ENCODE measurements at regions of chr7 and their contacts with region 1.

Region 1: DNA sequence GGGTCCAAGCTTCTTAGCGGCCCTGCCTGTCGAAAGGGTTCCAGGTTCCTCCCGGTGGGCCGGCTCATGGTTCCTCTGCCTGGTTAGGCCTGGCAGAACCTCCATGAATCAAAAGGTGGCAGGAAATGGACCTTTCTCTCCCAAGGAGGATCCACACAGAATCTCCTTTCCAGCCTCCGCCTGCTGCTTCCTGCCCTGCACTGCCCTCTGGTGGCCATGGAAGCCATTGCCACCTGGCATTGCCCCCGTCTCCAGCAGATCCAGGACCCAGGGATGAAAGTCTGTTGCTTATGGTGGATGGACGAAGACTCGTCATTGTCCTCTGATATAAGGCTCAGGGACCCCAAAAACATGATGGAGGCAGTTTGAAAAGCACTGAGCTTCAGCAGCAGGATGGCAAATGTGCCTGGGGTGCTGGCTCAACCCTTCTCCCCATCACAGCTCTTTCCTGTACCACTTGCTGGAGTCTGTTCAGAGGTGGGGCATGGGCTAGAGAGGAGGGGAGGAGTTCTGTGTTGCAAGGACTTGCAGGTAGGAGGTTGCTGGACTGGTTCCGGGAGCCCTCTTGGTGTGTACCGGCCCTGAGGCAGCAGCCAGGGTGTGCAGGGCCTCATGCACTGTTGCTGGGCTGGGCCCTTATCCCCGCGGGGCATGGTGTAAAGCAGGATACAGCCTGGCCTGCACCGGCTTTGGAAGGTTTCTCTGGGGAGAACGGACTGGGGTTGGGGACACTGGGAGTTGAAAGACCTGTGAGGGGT is 11.3 kb upstream of the INMT start:
- DNase-seq: peak; percentile 85
- H3K4me3 Mint-ChIP-seq: no peak overlapping the region
- H3K27ac Mint-ChIP-seq: no peak overlapping the region
- H3K4me1 Mint-ChIP-seq: peaks cover 29% of the 10 kb centered on the region
- H3K27me3 Mint-ChIP-seq: no peaks in the 10 kb centered on the region

Region 2: DNA sequence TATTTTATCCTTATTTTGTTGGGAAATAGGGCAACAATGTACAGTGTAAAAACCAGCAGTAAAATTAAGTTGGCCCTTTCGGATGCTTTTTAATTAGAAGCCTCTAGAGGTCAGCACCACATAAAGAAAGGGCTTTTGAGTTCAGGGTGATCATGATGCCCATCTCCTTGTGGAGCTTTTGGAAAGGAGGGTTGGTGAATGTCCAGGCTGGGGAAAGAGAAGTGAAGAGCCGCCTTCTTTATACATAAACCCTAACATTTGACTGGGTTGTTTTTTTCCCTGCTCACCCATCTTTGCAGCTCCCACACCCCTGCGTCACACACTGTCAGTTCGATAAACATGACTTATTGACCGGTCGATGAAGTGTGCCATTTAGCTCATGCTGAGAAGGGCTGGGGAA is 576.0 kb before region 1 on chr7:
- CTCF ChIA-PET with region 1: interaction called, 3 read pairs
- intact Hi-C with region 1: loop called (anchors 5 kb)
- DNase-seq: no peak
- H3K4me3 Mint-ChIP-seq: no peak overlapping the region
- H3K27ac Mint-ChIP-seq: peak overlapping the region; percentile 14
- H3K4me1 Mint-ChIP-seq: peaks cover 32% of the 10 kb centered on the region
- H3K27me3 Mint-ChIP-seq: no peaks in the 10 kb centered on the region

Region 3: GRCh38 chr7:30510124-30511075 is 230.2 kb before region 1 on chr7:
- CTCF ChIA-PET with region 1: interaction called, 4 read pairs
- intact Hi-C with region 1: loop called (anchors 1 kb)
- DNase-seq: peak; percentile 57
- H3K4me3 Mint-ChIP-seq: no peak overlapping the region
- H3K27ac Mint-ChIP-seq: no peak overlapping the region
- H3K4me1 Mint-ChIP-seq: peaks cover 5% of the 10 kb centered on the region
- H3K27me3 Mint-ChIP-seq: no peaks in the 10 kb centered on the region

Region 4: GRCh38 chr7:30634193-30634626 is 106.4 kb before region 1 on chr7:
- CTCF ChIA-PET with region 1: interaction called, 12 read pairs
- intact Hi-C with region 1: no loop called
- DNase-seq: no peak
- H3K4me3 Mint-ChIP-seq: no peak overlapping the region
- H3K27ac Mint-ChIP-seq: no peak overlapping the region
- H3K4me1 Mint-ChIP-seq: no peaks in the 10 kb centered on the region
- H3K27me3 Mint-ChIP-seq: no peaks in the 10 kb centered on the region

Region 5: DNA sequence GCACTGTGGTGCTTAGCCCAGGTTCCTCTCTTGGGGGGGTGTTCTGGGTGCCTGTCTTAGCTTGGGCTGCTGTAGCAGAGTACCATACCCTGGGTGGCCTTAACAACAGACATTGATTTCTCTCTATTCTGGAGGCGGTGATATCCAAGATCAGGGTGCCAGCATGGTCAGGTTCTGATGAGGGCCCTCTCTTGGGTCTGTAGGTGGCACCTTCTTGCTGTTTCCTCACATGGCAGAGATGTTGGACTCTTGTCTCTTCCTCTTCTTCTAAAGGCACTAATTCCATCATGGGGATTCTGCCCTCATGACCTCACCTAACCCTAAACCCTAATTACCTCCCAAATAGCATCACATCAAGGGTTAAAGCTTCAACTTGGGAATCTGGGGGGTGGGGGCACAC is 38.4 kb before region 1 on chr7:
- CTCF ChIA-PET with region 1: interaction called, 81 read pairs
- intact Hi-C with region 1: loop called (anchors 1 kb)
- DNase-seq: peak; percentile 61
- H3K4me3 Mint-ChIP-seq: no peak overlapping the region
- H3K27ac Mint-ChIP-seq: no peak overlapping the region
- H3K4me1 Mint-ChIP-seq: peaks cover 4% of the 10 kb centered on the region
- H3K27me3 Mint-ChIP-seq: no peaks in the 10 kb centered on the region

Region 6: GRCh38 chr7:30750683-30751650 is 10.4 kb after region 1 on chr7:
- CTCF ChIA-PET with region 1: interaction called, 15 read pairs
- intact Hi-C with region 1: no loop called
- DNase-seq: no peak
- H3K4me3 Mint-ChIP-seq: no peak overlapping the region
- H3K27ac Mint-ChIP-seq: no peak overlapping the region
- H3K4me1 Mint-ChIP-seq: no peaks in the 10 kb centered on the region
- H3K27me3 Mint-ChIP-seq: no peaks in the 10 kb centered on the region